ENCODE measurements at regions of chr3 and their contacts with region 1.

Region 1: DNA sequence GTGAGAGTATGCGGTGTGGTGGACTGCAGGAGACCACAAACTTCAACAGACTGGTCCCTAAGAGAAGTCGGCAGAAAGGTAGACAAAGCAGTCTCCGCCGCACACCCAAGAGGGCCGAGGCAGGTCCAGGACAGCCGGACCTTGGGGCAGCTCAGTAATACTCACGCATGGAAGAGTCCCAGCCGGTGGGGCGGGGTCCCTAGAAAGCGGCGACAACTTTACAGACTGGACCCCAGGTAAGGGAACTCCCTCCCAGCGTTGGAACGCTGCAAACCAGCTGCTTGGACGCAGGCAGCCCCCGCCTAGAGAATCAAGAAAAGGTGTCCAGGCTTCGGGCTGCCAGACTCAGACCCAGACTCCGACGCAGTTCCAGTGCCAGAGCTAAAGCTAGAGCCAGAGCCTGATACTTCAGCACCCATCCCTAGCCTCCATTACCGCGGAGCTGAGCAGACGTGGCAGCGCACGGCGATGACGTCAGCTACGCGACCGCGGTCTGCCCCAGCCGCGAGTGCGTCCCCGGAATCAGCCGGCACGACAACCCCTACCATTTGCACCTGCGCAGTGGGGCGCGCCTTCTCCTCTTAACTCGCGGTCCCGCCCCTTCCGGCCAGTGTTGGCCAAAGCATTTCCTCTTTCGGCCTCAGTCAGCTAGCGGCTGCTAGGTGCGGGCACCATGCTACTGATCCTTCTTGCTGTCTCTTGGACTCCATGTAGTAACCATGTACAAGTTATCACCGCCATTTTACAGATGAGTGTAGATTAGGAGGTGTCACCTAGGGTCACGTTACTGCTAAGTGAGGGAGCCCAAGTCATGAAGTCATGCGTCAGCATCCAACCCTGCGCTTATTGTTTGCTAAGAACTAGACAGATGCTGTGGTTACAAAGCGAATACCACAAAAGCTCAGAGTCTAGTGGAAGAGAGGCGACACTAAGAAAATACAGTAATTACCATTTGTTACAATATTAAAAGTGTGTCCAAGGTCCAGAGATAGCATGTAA is at the start of gene TMEM39A:
- DNase-seq: peak; percentile 99
- ATAC-seq: peak; percentile 89
- H3K4me3 Mint-ChIP-seq: peak within 1 kb of the TSS; percentile 99
- H3K27ac Mint-ChIP-seq: peak within 1 kb of the TSS; percentile 91
- H3K4me1 Mint-ChIP-seq: peaks cover 41% of the 10 kb centered on the region
- H3K27me3 Mint-ChIP-seq: no peaks in the 10 kb centered on the region
- total RNA-seq, gene TMEM39A: 24.5 to 30.5 TPM

Region 2: DNA sequence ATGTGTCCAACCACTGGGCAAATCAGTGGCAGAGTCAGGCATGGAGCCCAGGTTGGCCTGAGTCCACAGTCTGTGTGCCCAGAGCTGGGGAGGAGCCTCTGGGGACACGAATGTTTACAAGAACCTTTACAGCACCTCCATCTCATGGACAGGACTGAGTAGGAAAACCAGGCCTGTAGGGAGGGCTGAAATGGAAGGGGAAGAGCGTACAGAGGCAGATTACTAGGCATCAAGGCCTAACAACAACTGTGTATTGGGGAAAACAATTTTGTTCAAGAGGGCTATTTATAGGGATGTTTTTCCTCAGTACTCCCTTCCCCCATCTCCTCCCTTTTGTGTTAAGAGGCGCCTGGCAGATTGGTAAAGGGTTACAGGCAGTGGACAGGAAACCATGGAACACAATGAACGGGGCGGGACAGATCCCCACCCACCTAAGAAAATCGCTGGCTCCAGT is 184.3 kb before region 1 on chr3:
- CTCF ChIA-PET with region 1: no interaction called
- POLR2A ChIA-PET with region 1: no interaction called
- intact Hi-C with region 1: loop called in 1 of 2 experiments (anchors 5 kb)
- DNase-seq: no peak
- ATAC-seq: no peak
- H3K4me3 Mint-ChIP-seq: no peak overlapping the region
- H3K27ac Mint-ChIP-seq: no peak overlapping the region
- H3K4me1 Mint-ChIP-seq: peaks cover 14% of the 10 kb centered on the region
- H3K27me3 Mint-ChIP-seq: no peaks in the 10 kb centered on the region

Region 3: GRCh38 chr3:119498186-119498987 is 34.9 kb after region 1 on chr3 and contains the start of gene TIMMDC1:
- CTCF ChIA-PET with region 1: interaction called, 7 read pairs
- POLR2A ChIA-PET with region 1: interaction called, 26 read pairs
- intact Hi-C with region 1: loop called (anchors 1 kb)
- DNase-seq: peak; percentile 99
- ATAC-seq: peak; percentile 99
- H3K4me3 Mint-ChIP-seq: peak within 1 kb of the TSS; percentile 96
- H3K27ac Mint-ChIP-seq: peak within 1 kb of the TSS; percentile 99
- H3K4me1 Mint-ChIP-seq: peaks cover 39% of the 10 kb centered on the region
- H3K27me3 Mint-ChIP-seq: no peaks in the 10 kb centered on the region
- total RNA-seq, gene TIMMDC1: 82.3 to 96.0 TPM

Region 4: GRCh38 chr3:119637679-119638525 is 174.4 kb after region 1 on chr3:
- CTCF ChIA-PET with region 1: no interaction called
- POLR2A ChIA-PET with region 1: no interaction called
- intact Hi-C with region 1: loop called (anchors 1 kb)
- DNase-seq: peak; percentile 14
- ATAC-seq: peak; percentile 34
- H3K4me3 Mint-ChIP-seq: no peak overlapping the region
- H3K27ac Mint-ChIP-seq: peak overlapping the region; percentile 92
- H3K4me1 Mint-ChIP-seq: peaks cover 38% of the 10 kb centered on the region
- H3K27me3 Mint-ChIP-seq: no peaks in the 10 kb centered on the region

Region 5: GRCh38 chr3:120742198-120742849 is 1278.9 kb after region 1 on chr3 and contains the starts of genes GTF2E1 and RABL3:
- CTCF ChIA-PET with region 1: no interaction called
- POLR2A ChIA-PET with region 1: no interaction called
- intact Hi-C with region 1: loop called in 1 of 2 experiments (anchors 5 kb)
- DNase-seq: peak; percentile 96
- ATAC-seq: peak; percentile 99
- H3K4me3 Mint-ChIP-seq: peak within 1 kb of the TSS; percentile 98
- H3K27ac Mint-ChIP-seq: peak within 1 kb of the TSS; percentile 95
- H3K4me1 Mint-ChIP-seq: peaks cover 28% of the 10 kb centered on the region
- H3K27me3 Mint-ChIP-seq: no peaks in the 10 kb centered on the region
- total RNA-seq, gene GTF2E1: 26.1 to 27.0 TPM
- total RNA-seq, gene RABL3: 35.5 to 37.8 TPM

Measured in activated CD4-positive, alpha-beta T cell treated with anti-CD3 and anti-CD28 coated beads for 36 hours (primary cell).